Activated CD4-positive, alpha-beta T cell treated with anti-CD3 and anti-CD28 coated beads, Interleukin-2, amount 10 ng/mL, durations not matched to agents 24 days and 14 days (primary cell): ENCODE measurements at regions of chr6 and their contacts with region 1.

Region 1: DNA sequence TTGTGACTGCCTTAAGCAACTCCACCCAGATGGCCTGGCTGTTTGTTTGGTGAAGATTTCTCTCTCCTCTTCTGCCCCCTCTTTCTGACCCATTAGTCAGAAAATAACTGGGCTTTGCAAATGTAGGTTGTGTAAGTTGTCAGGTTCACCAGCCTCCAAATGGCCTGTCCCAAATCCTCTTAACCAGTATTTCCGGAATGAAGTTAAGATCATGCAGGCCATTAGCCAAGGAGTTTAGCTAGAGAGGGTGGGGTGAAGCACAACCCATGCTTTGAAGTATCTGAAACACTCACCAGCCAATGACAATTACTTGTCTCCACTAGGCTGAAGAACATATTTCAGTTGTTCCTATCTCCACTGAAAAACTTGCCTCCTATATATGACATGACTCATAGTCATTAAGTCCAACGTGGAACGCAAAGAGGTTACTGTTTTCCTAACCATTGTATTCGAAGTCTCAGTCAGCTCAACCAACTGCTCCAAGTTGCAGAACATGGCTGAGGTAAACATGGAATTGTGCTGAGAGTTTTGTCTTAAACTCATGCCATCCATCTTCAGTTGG is 37.5 kb upstream of the TNFAIP3 start:
- DNase-seq: peak; percentile 55
- H3K4me3 Mint-ChIP-seq: peak overlapping the region; percentile 75
- H3K27ac Mint-ChIP-seq: peak overlapping the region; percentile 98
- H3K4me1 Mint-ChIP-seq: peaks cover 58% of the 10 kb centered on the region
- H3K27me3 Mint-ChIP-seq: no peaks in the 10 kb centered on the region

Region 2: DNA sequence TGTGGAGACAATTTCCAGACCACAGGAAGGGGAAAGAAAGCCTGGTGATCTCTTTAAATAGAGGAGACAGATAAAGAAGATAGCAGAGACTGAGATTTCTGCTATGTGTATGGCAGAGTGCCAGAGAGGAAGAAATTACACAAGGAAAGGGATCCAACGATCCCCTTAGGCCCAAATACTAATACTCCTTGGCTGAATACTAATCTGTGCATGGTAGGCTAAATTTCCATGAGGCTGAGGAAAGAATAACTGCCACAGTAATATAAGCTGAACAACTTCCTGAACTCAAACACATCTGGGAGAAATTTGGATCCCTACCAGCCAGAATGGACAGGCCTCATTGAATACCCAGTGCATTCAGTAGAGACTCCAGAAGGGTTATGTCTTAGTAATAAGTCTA is 45.9 kb before region 1 on chr6:
- intact Hi-C with region 1: no loop called
- DNase-seq: no peak
- H3K4me3 Mint-ChIP-seq: no peak overlapping the region
- H3K27ac Mint-ChIP-seq: no peak overlapping the region
- H3K4me1 Mint-ChIP-seq: peaks cover 8% of the 10 kb centered on the region
- H3K27me3 Mint-ChIP-seq: no peaks in the 10 kb centered on the region

Region 3: GRCh38 chr6:137849181-137849980 is 19.8 kb after region 1 on chr6:
- intact Hi-C with region 1: loop called (anchors 1 kb)
- DNase-seq: no peak
- H3K4me3 Mint-ChIP-seq: no peak overlapping the region
- H3K27ac Mint-ChIP-seq: peak overlapping the region; percentile 38
- H3K4me1 Mint-ChIP-seq: peaks cover 20% of the 10 kb centered on the region
- H3K27me3 Mint-ChIP-seq: no peaks in the 10 kb centered on the region